HepG2 (cell line): ENCODE measurements at regions of chr6 and their contacts with region 1.

Region 1: GRCh38 chr6:128209771-128210170 is 308.9 kb upstream of the THEMIS start:
- DNase-seq: peak; percentile 12
- ATAC-seq: peak; percentile 52; the same call in 2 of the 3 replicates
- H3K4me3 ChIP-seq: no peak overlapping the region
- H3K27ac ChIP-seq: no peak overlapping the region
- H3K4me1 ChIP-seq: peaks cover 26% of the 10 kb centered on the region
- H3K27me3 ChIP-seq: no peaks in the 10 kb centered on the region
- CTCF ChIP-seq: no peak
- EP300 ChIP-seq: no peak
- POLR2A ChIP-seq: no peak
- RAD21 ChIP-seq: no peak

Region 2: GRCh38 chr6:128068116-128068479 is 141.7 kb before region 1 on chr6:
- CTCF ChIA-PET with region 1: no interaction called
- POLR2A ChIA-PET with region 1: no interaction called
- in situ Hi-C with region 1: no loop called
- intact Hi-C with region 1: loop called (anchors 10 kb)
- DNase-seq: peak; percentile 32
- ATAC-seq: peak; percentile 37; the same call in 2 of the 3 replicates
- H3K4me3 ChIP-seq: no peak overlapping the region
- H3K27ac ChIP-seq: peak overlapping the region; percentile 37
- H3K4me1 ChIP-seq: peaks cover 33% of the 10 kb centered on the region
- H3K27me3 ChIP-seq: no peaks in the 10 kb centered on the region
- CTCF ChIP-seq: 0 out of 2 replicates have a peak, but pooled peaks have one; percentile 16
- EP300 ChIP-seq: no peak
- POLR2A ChIP-seq: no peak
- RAD21 ChIP-seq: no peak

Region 3: GRCh38 chr6:128230267-128230989 is 20.7 kb after region 1 on chr6:
- CTCF ChIA-PET with region 1: no interaction called
- POLR2A ChIA-PET with region 1: no interaction called
- in situ Hi-C with region 1: no loop called
- intact Hi-C with region 1: loop called (anchors 2 kb)
- DNase-seq: peak; percentile 72
- ATAC-seq: peak; percentile 90
- H3K4me3 ChIP-seq: no peak overlapping the region
- H3K27ac ChIP-seq: peak overlapping the region; percentile 58
- H3K4me1 ChIP-seq: peaks cover 20% of the 10 kb centered on the region
- H3K27me3 ChIP-seq: no peaks in the 10 kb centered on the region
- CTCF ChIP-seq: no peak
- EP300 ChIP-seq: 0 out of 4 replicates have a peak, but pooled peaks of 1 of the 2 experiments have one; percentile 49
- POLR2A ChIP-seq: no peak
- RAD21 ChIP-seq: no peak